Panc1 (cell line): ENCODE measurements at regions of chr1 and their contacts with region 1.

Region 1: DNA sequence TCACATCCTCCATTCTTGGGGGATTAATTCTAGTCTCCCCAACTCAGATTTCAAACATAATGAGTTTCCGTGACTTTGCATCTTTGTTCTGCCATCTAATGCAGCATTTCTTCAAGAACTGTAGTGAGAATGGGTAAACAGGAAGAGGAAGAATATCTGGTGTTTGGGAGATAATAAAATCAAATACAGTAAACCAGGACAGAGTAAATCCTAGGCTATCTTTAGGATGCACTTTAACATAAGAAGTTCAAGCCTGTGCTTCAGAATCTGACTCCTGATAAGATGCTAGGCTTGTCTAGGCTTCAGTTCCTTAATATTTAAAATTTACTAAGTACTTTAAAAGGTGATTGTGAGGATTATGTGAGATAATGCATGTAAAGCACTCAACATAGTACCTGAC is 27.9 kb downstream of the PATJ start:
- DNase-seq: no peak
- ATAC-seq: no peak
- H3K4me3 ChIP-seq: no peak overlapping the region
- H3K27ac ChIP-seq: no peak overlapping the region
- H3K4me1 ChIP-seq: no peaks in the 10 kb centered on the region
- H3K27me3 ChIP-seq: no peaks in the 10 kb centered on the region
- CTCF ChIP-seq: no peak

Region 2: DNA sequence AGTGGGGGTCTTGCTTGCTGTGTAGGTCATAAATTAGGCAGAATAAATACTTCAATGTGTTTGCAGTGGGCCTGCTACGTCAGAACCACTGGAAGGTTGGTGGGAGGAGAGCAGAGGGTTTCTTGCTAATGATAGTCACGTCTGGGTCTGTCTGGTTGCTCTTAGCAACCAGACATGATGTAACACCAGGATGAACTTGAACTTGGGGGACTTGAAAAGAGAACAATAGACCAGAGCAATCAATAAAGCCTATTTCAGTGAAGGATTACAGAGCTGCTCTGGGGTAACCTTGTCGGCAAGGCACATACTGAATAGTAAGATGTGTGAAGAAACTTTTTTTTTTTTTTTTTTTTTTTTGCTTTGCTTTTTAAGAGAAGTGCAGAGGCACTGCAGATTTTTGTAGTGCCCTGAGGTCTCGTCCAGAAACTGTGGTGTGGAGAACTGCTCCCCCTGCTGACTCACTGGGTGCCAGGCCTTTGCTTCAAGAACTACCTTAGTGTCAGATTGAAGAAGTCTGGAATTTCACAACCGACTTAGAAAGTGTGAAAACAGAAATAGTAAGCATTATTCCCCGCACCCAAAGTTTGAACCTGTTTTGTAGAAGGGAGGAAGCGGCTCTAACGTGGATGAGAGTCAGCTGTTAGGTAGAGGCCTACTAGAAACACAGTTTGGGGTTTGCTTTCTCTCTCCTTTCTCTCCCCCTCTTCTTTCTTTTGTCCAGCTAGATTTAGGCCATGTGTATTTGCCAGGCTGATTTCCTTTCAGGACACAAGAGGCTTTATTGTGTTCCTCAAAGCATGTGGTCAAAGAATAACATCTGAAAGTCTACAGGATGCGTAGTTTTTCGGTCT is 316.8 kb before region 1 on chr1:
- CTCF ChIA-PET with region 1: no interaction called
- POLR2A ChIA-PET with region 1: no interaction called
- in situ Hi-C with region 1: no loop called
- intact Hi-C with region 1: no loop called
- DNase-seq: peak; percentile 50
- ATAC-seq: peak; percentile 98
- H3K4me3 ChIP-seq: peak overlapping the region in 1 of 2 experiments; percentile 7; a peak in 1 of 4 replicates
- H3K27ac ChIP-seq: peak overlapping the region; percentile 31; the same call in 1 of the 2 replicates
- H3K4me1 ChIP-seq: peaks cover 11% of the 10 kb centered on the region
- H3K27me3 ChIP-seq: no peaks in the 10 kb centered on the region
- CTCF ChIP-seq: peak; percentile 88

Region 3: DNA sequence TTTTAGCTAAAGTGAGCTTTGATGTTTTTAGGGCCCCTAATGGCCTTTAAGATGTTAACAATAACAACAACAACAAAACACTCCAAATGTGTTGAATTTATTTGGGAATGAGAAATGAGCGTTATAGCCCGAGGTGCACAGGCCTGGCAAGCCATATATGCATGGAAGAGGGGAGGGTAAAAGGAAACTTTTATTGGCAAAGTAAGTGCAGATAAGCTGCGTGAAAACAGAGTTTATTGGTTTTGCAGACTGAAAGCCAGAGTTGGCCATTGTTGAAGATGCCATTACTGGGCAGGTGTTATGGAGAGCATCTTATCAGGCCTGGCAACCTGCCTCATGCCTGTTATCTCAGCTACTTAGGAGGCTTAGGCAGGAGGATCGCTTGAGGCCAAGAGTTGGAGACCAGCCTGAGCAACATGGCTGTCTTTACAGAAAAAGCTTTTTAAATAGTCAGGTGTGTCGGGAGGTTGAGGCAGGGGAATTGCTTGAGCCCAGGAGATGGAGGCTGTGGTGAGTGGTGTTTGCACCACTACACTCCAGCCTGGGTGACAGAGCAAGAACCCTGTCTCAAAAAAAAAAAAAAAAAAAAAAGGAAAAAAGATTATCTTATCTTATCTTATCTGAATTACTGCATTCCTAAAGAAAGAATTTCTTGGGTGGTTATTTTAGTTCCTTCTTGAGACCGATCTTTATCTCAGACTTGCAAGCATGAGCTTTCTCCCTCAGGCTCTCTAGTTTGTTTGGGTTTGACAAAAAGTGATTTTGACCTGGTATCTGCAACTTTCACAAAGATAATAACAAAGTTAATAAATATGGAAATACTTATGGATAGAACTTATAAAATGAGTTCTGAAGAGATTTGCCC is 26.2 kb before region 1 on chr1:
- CTCF ChIA-PET with region 1: interaction called, 11 read pairs
- POLR2A ChIA-PET with region 1: no interaction called
- in situ Hi-C with region 1: no loop called
- intact Hi-C with region 1: no loop called
- DNase-seq: no peak
- ATAC-seq: peak; percentile 6; the same call in 1 of the 2 replicates
- H3K4me3 ChIP-seq: peak overlapping the region; percentile 68 to 83
- H3K27ac ChIP-seq: peak overlapping the region; percentile 90
- H3K4me1 ChIP-seq: peaks cover 34% of the 10 kb centered on the region
- H3K27me3 ChIP-seq: no peaks in the 10 kb centered on the region
- CTCF ChIP-seq: no peak